ENCODE measurements at regions of chr2 and their contacts with region 1.

Region 1: GRCh38 chr2:127324635-127325034 is 30.7 kb upstream of the ERCC3 start:
- DNase-seq: peak; percentile 50
- H3K4me3 ChIP-seq: no peak overlapping the region; a peak in 1 of 4 replicates
- H3K27ac ChIP-seq: no peak overlapping the region
- H3K4me1 ChIP-seq: no peaks in the 10 kb centered on the region; a peak in 1 of 4 replicates
- H3K27me3 ChIP-seq: no peaks in the 10 kb centered on the region
- CTCF ChIP-seq: peak; percentile 81
- EP300 ChIP-seq: no peak
- RAD21 ChIP-seq: peak; percentile 78

Region 2: GRCh38 chr2:127305990-127306585 is 18.5 kb before region 1 on chr2:
- CTCF ChIA-PET with region 1: interaction called, 15 read pairs
- POLR2A ChIA-PET with region 1: no interaction called
- DNase-seq: no peak
- H3K4me3 ChIP-seq: no peak overlapping the region
- H3K27ac ChIP-seq: no peak overlapping the region
- H3K4me1 ChIP-seq: no peaks in the 10 kb centered on the region
- H3K27me3 ChIP-seq: no peaks in the 10 kb centered on the region
- CTCF ChIP-seq: no peak
- EP300 ChIP-seq: no peak
- RAD21 ChIP-seq: no peak

Region 3: DNA sequence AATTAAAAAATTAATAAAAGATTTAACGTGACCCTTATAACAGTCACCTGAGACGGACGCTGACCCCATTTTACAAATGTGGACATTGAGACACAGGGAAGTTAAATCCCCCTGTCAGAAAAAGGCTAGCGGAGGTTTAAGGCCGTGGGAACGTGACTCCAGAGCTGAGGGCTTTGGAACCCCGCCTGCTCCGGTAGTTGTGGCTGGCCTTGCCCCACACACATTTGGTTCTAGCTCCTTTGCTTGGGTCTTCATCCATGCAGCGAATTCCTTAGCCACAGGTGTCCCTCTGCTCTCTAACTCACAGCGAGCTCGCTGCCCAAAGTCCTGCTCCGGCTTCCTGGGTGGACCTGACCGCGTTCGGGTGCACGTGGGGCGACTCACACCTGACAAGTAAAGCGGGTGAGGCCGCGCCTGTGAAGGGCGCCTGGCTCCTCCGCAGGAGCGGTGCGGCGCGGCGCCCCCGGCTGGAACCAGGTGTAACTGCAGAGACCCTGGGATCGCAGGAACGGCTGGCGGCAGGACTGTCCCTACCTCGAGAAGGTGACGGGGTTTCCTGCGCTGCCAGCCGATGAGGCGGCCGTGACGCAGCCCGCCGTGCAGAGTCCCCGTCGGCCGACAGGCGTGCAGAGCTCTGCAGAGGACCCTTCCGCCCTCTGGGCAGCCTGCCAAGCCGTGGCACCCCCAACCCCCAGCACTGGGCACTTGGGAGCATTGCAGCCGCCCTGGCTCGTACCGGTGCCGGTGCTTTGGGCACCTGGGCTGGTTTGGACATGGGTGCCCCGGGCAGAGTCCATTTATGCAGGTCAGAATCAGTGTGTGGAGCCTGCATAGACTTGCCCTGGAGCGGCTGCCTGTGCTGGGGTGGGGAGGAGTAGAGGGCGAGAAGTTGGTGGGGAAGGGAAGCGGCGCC is 91.2 kb after region 1 on chr2:
- CTCF ChIA-PET with region 1: interaction called, 20 read pairs
- POLR2A ChIA-PET with region 1: no interaction called
- DNase-seq: peak; percentile 90
- H3K4me3 ChIP-seq: peak overlapping the region in 1 of 2 experiments; percentile 39; a peak in 2 of 4 replicates
- H3K27ac ChIP-seq: no peak overlapping the region
- H3K4me1 ChIP-seq: peaks cover 17 to 23% of the 10 kb centered on the region in 2 experiments; a peak in 3 of 4 replicates
- H3K27me3 ChIP-seq: no peaks in the 10 kb centered on the region
- CTCF ChIP-seq: peak; percentile 58
- EP300 ChIP-seq: no peak
- RAD21 ChIP-seq: peak; percentile 58

Region 4: GRCh38 chr2:127453392-127454171 is 128.9 kb after region 1 on chr2:
- CTCF ChIA-PET with region 1: interaction called, 14 read pairs
- POLR2A ChIA-PET with region 1: no interaction called
- DNase-seq: peak; percentile 28
- H3K4me3 ChIP-seq: no peak overlapping the region
- H3K27ac ChIP-seq: no peak overlapping the region
- H3K4me1 ChIP-seq: no peaks in the 10 kb centered on the region; a peak in 1 of 4 replicates
- H3K27me3 ChIP-seq: no peaks in the 10 kb centered on the region
- CTCF ChIP-seq: peak; percentile 26
- EP300 ChIP-seq: no peak
- RAD21 ChIP-seq: no peak; the same call in 1 of the 2 replicates

Region 5: GRCh38 chr2:127463155-127463991 is 138.7 kb after region 1 on chr2:
- CTCF ChIA-PET with region 1: interaction called, 14 read pairs
- POLR2A ChIA-PET with region 1: no interaction called
- DNase-seq: peak; percentile 49
- H3K4me3 ChIP-seq: no peak overlapping the region
- H3K27ac ChIP-seq: no peak overlapping the region
- H3K4me1 ChIP-seq: no peaks in the 10 kb centered on the region; a peak in 1 of 4 replicates
- H3K27me3 ChIP-seq: no peaks in the 10 kb centered on the region
- CTCF ChIP-seq: no peak
- EP300 ChIP-seq: no peak
- RAD21 ChIP-seq: no peak

Region 6: DNA sequence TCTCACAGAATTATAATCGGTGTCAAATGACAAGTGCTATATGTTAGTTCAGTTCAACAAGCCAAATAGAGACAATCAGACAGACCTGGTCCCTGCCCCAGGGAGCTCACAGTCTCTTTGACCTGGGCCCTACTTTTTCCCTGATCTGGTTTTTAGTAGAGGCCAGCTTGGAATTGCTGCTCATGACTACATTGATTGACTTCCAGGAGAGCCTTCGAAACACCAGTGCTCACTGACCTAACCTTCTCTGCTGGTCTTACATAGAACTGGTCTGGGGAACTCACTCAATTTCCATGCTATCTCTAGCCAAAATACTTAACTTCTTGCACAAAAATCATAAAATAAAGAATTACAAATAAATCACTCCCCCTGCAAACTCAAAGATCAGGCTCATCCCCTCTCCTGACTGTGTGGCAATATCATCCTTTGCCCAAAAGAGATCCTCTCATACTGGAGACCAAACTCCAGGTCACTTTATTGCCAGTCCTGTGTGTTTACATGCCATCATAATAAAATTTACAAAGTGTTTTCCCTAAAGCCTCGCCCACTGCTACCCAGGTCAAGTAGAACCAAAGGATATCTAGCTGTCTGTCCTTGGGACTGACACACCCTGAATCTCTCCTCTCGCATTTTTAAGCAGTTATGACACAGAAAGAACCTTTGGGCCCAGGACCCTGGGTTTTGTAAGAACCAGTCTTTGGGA is 146.8 kb after region 1 on chr2:
- CTCF ChIA-PET with region 1: interaction called, 14 read pairs
- POLR2A ChIA-PET with region 1: no interaction called
- DNase-seq: no peak
- H3K4me3 ChIP-seq: no peak overlapping the region
- H3K27ac ChIP-seq: no peak overlapping the region
- H3K4me1 ChIP-seq: no peaks in the 10 kb centered on the region
- H3K27me3 ChIP-seq: no peaks in the 10 kb centered on the region
- CTCF ChIP-seq: no peak
- EP300 ChIP-seq: no peak
- RAD21 ChIP-seq: no peak

Region 7: DNA sequence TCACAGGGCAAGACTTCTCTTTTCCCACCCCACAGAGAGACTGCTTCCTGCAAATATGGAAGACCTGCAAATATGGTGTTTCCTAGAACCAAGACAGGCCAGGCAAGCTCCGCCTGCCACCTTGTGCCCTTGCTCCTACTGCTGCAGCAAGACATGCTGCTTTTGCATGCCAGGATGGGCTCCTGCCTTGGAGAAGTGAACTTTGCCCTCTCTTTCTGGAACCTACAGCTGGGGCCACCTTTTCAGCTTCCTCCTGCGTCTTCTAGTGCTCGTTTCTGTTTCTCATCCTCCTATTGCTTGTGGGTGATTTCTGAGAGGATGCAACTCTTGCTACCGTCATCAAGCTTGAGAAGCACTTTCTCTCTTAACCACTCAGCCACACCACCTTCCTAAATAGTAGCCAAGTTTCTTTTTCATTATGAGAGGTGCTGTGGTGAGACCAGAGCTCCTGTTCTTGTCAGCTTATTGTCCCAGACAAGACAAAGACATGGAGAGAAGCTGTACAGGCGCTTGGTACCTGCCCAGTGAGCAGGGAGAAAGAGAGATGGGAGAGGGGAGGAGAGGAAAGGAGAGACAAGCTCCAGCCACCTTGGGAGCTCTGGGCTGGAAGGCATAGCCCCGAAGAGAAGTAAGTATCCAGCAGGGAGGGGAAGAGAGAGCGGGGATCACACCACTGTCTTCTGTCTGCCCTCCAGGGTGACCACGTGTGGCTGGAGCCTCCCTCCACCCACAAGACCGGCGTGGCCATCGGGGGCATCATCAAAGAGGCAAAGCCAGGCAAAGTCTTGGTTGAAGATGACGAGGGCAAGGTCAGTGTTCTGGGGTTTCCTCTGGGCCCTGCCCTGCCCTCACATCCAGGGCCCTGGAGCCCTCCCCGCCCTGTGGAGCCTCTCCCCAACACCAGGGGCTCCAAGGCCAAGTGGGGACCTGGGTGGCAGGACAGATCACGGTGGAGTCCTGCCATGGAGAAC is 239.1 kb after region 1 on chr2:
- CTCF ChIA-PET with region 1: no interaction called
- POLR2A ChIA-PET with region 1: no interaction called
- DNase-seq: no peak
- H3K4me3 ChIP-seq: no peak overlapping the region
- H3K27ac ChIP-seq: no peak overlapping the region
- H3K4me1 ChIP-seq: no peaks in the 10 kb centered on the region
- H3K27me3 ChIP-seq: no peaks in the 10 kb centered on the region; the same call in 1 of the 2 replicates
- CTCF ChIP-seq: no peak
- EP300 ChIP-seq: no peak
- RAD21 ChIP-seq: no peak

Region 8: DNA sequence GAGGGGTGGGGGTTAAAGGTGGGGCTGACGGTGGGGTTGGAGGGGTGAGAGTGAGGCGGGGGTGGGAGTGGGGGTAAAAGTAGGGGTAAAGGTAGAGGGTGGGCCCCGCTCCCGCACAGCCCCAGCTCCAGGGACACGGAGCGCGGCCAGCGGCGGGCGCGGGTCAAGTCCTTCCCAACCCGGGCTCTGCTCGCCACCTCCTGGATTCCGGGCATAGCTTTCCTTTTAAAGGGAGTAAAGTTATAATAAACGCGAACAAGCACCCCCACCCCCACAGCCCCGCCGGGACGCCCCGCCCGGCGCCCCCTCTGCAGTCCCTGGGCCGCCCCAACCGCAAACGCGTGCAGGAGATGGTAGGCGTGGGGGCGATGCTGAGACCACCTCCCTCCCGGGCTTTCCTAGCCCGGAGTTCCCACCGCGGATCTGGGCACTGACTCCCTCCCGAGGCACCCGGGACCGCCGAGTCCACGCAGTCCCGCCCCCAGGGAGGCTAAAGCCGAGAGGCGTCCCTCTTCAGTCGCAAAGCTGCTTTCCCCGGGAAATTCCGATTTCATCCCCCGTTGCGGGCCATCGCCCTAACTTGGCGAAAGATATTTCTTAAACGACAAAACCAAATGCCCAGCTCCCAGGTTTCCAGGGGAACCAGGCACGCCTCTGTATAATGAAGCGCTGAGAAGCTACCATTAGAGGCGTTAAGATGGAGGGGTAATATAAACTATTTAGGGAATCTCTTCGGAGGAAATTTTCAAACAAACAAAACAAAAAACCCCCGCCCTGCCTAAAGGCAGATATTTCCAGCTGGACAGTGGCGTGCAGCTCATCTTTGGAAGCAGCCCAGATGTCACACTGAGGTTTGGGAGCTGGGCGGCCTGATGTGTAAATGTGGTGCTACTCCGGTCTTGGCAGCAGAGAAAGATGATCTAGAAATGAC is 351.0 kb after region 1 on chr2 and contains the start of gene LIMS2:
- CTCF ChIA-PET with region 1: interaction called, 10 read pairs
- POLR2A ChIA-PET with region 1: no interaction called
- DNase-seq: peak; percentile 85
- H3K4me3 ChIP-seq: peak within 1 kb of the TSS; percentile 58 to 85
- H3K27ac ChIP-seq: no peak within 1 kb of the TSS
- H3K4me1 ChIP-seq: peaks cover 0 to 6% of the 10 kb centered on the region in 2 experiments; a peak in 1 of 4 replicates
- H3K27me3 ChIP-seq: peaks cover 14% of the 10 kb centered on the region; the same call in 1 of the 2 replicates
- CTCF ChIP-seq: 0 out of 2 replicates have a peak, but pooled peaks have one; percentile 16
- EP300 ChIP-seq: no peak
- RAD21 ChIP-seq: peak; percentile 57
- polyA plus RNA-seq, gene LIMS2: 2.2 and 2.7 TPM in 2 replicates